ENCODE measurements at regions of chr12 and their contacts with region 1.

Region 1: DNA sequence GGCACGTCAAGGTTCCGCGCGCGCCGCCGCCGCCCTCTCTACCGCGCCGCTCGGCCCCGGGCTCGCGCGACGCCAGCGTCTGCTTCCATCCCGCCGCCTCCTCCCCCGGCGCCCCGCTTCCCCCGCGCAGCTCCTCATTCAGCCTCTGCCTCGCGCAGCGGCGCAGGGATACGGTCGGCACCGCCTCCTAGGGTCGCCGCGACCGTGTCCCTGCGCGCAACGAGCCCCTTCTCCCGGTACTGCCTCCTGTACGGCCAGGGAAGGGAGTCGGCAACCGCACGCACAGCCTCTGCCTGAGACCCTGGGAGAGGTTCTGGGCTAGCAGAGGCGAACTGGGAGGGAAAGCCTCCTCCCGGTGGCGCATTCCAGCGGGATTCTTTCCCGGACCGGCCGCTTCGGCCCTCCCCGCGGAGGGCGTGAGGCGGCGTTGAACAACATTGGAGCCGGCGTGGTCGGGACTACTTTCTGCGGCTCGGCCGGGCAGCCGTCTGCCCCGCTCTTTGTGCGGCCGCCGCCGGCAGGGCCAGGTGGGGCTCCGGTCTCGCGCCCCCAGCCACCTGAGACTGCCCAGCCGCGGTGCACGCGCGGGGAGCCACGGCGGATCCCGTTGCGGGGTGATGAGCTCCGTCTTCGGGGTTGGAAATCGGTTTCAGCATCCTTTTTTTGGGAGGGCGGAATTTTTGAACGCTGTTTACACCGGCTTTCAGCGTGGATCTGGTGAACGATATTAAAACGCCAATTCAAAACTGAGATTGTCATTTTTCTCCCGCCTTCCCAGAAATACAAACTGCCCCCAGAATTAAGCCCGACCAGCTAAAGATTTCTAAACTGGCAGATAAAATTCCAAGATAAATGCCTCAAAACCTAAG is at the start of gene LRP6:
- DNase-seq: peak; percentile 93 to 95
- ATAC-seq: peak; percentile 96 to 97 (median 96)
- H3K4me3 ChIP-seq: peak within 1 kb of the TSS; percentile 89
- H3K27ac ChIP-seq: peak within 1 kb of the TSS; percentile 99
- H3K4me1 ChIP-seq: peaks cover 16% of the 10 kb centered on the region
- H3K27me3 ChIP-seq: no peaks in the 10 kb centered on the region
- CTCF ChIP-seq: no peak
- total RNA-seq, gene LRP6: 16.6 to 31.5 (median 22.8) TPM

Region 2: GRCh38 chr12:12159988-12160387 is 107.1 kb before region 1 on chr12:
- intact Hi-C with region 1: loop called in 1 of 2 experiments (anchors 5 kb)
- DNase-seq: no peak
- ATAC-seq: no peak
- H3K4me3 ChIP-seq: no peak overlapping the region
- H3K27ac ChIP-seq: peak overlapping the region; percentile 56
- H3K4me1 ChIP-seq: peaks cover 22% of the 10 kb centered on the region
- H3K27me3 ChIP-seq: no peaks in the 10 kb centered on the region
- CTCF ChIP-seq: no peak

Region 3: DNA sequence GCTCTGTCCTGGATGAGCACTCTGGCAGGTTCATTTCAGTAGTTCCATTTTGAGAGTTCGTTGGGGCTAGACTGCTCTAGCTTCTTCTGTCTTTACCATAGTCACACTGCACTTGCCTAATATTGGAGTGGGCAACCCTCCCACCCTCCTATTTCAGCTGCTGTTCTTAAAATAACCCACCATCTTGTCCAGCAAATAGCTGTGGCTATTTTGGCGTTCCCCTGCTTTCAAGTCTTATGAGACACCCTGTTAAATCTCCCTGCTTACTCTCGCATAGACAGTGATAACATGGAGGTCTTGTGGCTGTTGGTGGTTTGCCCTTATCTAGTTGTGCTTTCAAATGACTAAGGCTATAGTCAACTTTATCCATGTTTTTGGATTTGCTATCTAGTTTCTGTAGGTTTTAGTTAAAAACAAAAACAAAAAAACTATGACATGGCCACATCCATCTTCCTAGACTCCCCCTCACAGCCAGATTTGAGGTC is 65.8 kb before region 1 on chr12:
- intact Hi-C with region 1: loop called in 1 of 2 experiments (anchors 10 kb)
- DNase-seq: peak in 1 of 2 donors; percentile 57
- ATAC-seq: peak; percentile 91 to 95 (median 94)
- H3K4me3 ChIP-seq: peak overlapping the region; percentile 33
- H3K27ac ChIP-seq: peak overlapping the region; percentile 67
- H3K4me1 ChIP-seq: peaks cover 22% of the 10 kb centered on the region
- H3K27me3 ChIP-seq: no peaks in the 10 kb centered on the region
- CTCF ChIP-seq: no peak

Region 4: DNA sequence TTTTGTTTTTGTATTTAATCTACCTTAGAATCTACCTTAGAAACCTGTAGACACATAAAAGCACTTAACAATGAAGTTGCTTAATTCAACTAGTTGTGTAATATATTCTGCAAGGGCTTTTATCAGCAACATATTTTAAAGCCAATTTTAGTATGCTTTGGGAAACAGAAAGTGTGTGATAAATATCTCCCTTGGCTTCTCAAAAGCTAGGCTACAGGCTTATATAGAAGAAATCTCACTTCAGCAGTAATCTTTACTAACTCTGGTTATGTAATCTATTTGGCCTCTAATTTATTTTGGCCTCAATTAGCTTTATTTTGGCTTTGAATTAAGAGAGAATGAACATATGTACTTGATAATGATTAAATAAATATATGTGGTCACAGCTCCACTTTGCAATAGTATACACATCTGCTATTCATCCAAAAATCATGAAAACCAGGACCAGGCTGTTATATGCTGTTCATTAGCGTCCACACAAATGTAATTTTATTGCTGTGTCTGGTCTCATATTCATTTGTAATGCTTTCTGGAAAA is 37.5 kb before region 1 on chr12:
- intact Hi-C with region 1: loop called in 1 of 2 experiments (anchors 5 kb)
- DNase-seq: no peak
- ATAC-seq: no peak
- H3K4me3 ChIP-seq: no peak overlapping the region
- H3K27ac ChIP-seq: no peak overlapping the region
- H3K4me1 ChIP-seq: peaks cover 26% of the 10 kb centered on the region
- H3K27me3 ChIP-seq: no peaks in the 10 kb centered on the region
- CTCF ChIP-seq: no peak

Measured in psoas muscle (tissue), 8 donors.